ENCODE measurements at regions of chr3 and their contacts with region 1.

Region 1: GRCh38 chr3:134485718-134486576 is at the starts of genes ANAPC13 and CEP63:
- DNase-seq: peak; percentile 87

Region 2: GRCh38 chr3:134232151-134232550 is 253.8 kb before region 1 on chr3:
- CTCF ChIA-PET with region 1: no interaction called
- POLR2A ChIA-PET with region 1: no interaction called
- DNase-seq: no peak

Region 3: GRCh38 chr3:134373994-134374790 is 111.8 kb before region 1 on chr3 and contains the start of gene AMOTL2:
- CTCF ChIA-PET with region 1: interaction called, 3 read pairs
- POLR2A ChIA-PET with region 1: interaction called, 10 read pairs
- DNase-seq: peak; percentile 91

Region 4: GRCh38 chr3:134473868-134474546 is 11.9 kb before region 1 on chr3:
- CTCF ChIA-PET with region 1: no interaction called
- POLR2A ChIA-PET with region 1: interaction called, 13 read pairs
- DNase-seq: peak; percentile 52